HepG2 (cell line): ENCODE measurements at regions of chr5 and their contacts with region 1.

Region 1: DNA sequence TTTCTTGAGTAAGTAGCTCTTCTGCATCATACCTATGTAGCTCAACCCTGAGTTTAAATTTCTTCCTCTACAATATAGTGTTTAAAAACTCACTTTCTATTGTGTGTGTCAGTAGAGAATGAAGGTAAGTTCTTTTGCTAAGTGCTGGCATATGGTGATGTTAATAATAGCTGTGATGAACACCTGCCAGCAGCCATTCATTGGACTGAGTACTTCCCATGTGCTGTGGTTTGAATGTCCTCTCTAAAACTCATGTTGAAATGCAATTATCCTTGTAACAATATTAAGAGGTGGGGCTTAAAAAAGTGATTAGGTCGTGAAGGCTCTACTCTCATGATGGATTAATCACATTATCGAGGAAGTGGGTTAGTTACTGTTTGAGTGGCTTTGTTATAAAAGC is 645.2 kb upstream of the RGMB start:
- DNase-seq: no peak
- ATAC-seq: no peak
- H3K4me3 ChIP-seq: no peak overlapping the region
- H3K27ac ChIP-seq: no peak overlapping the region
- H3K4me1 ChIP-seq: no peaks in the 10 kb centered on the region
- H3K27me3 ChIP-seq: no peaks in the 10 kb centered on the region
- CTCF ChIP-seq: no peak
- EP300 ChIP-seq: no peak
- POLR2A ChIP-seq: no peak
- RAD21 ChIP-seq: no peak

Region 2: DNA sequence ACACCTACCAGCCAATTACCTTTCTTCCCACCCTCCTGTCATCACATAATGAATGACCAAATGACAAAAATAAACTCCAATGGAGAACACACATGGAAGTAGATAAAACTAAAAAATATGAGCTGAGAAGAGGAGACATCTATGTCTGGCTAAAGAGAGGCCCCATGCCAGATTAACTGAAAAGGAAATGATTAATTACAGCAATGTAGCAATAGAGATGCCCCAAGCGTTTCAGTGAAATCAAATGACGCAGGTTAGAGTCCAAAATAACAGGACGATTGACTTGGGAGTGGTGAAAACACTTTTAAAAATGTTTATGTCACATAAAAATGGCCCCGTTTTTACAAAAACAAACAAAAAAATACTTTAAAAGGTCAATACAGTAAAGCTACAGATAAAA is 1635.6 kb before region 1 on chr5:
- CTCF ChIA-PET with region 1: no interaction called
- POLR2A ChIA-PET with region 1: no interaction called
- in situ Hi-C with region 1: no loop called
- intact Hi-C with region 1: no loop called
- DNase-seq: no peak
- ATAC-seq: no peak
- H3K4me3 ChIP-seq: no peak overlapping the region
- H3K27ac ChIP-seq: no peak overlapping the region
- H3K4me1 ChIP-seq: no peaks in the 10 kb centered on the region
- H3K27me3 ChIP-seq: no peaks in the 10 kb centered on the region
- CTCF ChIP-seq: no peak
- EP300 ChIP-seq: no peak
- POLR2A ChIP-seq: no peak
- RAD21 ChIP-seq: no peak

Region 3: DNA sequence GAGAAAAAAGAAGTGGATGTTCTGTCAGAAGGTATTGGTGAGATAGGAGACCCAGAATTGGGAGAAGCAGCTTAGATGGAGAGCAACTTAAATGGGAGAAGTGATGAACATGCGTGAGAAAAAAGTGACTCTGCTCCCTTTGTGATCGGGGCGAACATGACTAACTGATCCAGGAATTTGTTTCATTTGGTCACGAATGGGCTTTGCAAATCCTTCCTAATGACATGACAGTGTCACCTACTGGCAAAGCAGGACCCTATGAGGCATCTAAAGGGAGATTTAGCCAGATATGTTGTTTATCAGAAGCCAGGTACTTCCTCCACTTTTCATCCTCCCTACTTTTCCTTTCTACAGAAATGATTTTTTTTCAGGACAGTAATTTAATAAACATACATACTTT is 142.2 kb before region 1 on chr5:
- CTCF ChIA-PET with region 1: no interaction called
- POLR2A ChIA-PET with region 1: no interaction called
- in situ Hi-C with region 1: no loop called
- intact Hi-C with region 1: no loop called
- DNase-seq: no peak
- ATAC-seq: no peak
- H3K4me3 ChIP-seq: no peak overlapping the region
- H3K27ac ChIP-seq: no peak overlapping the region
- H3K4me1 ChIP-seq: no peaks in the 10 kb centered on the region
- H3K27me3 ChIP-seq: no peaks in the 10 kb centered on the region
- CTCF ChIP-seq: no peak
- EP300 ChIP-seq: no peak
- POLR2A ChIP-seq: no peak
- RAD21 ChIP-seq: no peak

Region 4: DNA sequence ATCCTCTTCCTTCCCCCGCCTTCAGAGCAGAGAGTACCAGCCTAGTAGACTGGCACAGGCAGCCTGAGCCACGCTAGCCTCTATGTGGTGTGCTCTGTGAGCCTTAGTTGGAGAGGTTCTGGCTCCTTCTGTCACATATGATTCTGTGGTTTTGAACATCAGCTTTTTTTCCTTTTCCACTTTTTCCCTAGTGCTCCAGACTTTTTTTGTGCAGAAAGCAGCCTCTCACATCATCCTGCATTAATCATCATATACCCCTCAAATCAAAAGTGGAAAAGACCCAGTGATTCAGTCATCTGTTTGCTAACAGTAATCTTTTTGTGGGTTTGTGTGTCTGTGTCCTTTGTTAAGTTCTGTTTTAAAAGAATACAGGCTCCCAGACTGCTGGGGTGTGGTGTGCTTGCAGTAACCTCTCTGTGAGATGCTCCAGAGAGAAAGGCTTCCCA is 18.7 kb before region 1 on chr5:
- CTCF ChIA-PET with region 1: no interaction called
- POLR2A ChIA-PET with region 1: no interaction called
- in situ Hi-C with region 1: no loop called
- intact Hi-C with region 1: loop called (anchors 2 kb)
- DNase-seq: no peak
- ATAC-seq: no peak
- H3K4me3 ChIP-seq: no peak overlapping the region
- H3K27ac ChIP-seq: no peak overlapping the region
- H3K4me1 ChIP-seq: no peaks in the 10 kb centered on the region
- H3K27me3 ChIP-seq: no peaks in the 10 kb centered on the region
- CTCF ChIP-seq: no peak
- EP300 ChIP-seq: no peak
- POLR2A ChIP-seq: no peak
- RAD21 ChIP-seq: no peak